Ovary (tissue), 10 donors: ENCODE measurements at regions of chr4 and their contacts with region 1.

Region 1: DNA sequence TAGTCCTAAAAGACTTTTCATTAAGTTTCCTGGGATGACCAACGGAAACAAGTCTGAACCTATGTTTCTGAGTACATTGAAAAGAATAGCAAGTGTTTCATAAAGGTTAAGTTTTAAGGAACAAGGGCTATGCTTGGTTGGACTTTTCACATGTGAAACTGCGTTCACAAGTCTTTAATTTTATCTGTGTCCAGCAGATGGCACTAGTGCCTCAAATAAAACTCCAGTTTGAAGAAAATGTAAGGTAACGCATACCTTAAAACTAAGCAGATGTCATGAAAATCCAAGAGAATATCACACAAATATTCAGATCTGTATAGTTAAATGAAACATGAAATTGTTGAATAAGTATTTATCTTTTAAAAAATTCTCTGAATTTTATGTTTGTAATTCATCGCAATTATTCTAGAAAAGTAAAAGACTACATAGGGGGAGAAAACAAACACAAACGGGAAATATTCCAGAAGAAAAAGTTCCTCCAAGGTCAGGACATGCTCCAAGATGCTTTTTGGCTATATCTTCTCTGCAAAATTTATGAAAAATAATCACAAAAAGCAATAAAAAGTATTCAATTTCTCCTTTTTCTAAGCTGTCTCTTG is 89.6 kb upstream of the MAD2L1 start:
- DNase-seq: peak in 1 of 5 donors; percentile 20
- H3K4me3 ChIP-seq: no peak overlapping the region
- H3K27ac ChIP-seq: no peak overlapping the region
- H3K4me1 ChIP-seq: no peaks in the 10 kb centered on the region
- H3K27me3 ChIP-seq: no peaks in the 10 kb centered on the region
- CTCF ChIP-seq: peak; percentile 51 to 62 (median 57)
- EP300 ChIP-seq: no peak
- POLR2A ChIP-seq: no peak

Region 2: DNA sequence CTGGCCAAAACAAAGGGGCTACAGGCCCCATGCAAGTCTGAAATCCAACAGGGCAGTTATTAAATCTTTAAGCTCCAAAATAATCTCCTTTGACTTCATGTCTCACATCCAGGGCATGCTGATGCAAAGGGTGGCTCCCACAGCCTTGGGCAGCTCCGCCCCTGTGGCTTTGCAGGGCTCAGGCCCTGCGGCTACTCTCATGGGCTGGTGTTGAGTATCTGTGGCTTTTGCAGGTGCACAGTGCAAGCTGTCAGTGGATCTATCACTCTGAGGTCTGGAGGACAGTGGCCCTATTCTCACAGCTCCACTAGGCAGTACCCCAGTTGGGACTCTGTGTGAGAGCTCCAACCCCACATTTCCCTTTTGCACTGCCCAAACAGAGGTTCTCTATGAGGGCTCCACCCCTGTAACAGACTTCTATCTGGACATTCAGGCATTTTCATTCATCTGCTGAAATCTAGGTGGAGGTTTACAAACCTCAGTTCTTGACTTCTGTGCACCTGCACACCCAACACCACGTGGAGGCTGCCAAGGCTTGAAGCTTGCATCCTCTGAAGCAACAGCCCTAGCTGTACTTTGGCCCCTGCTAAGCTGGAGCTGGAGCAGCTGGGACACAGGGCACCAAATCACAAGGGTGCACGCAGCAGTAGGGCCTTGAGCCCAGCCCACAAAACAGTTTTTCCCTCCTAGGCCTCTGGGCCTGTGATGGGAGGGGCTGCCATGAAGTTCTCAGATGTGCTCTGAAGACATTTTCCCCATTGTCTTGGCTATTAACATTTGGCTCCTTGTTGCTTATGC is 372.8 kb before region 1 on chr4:
- intact Hi-C with region 1: no loop called
- DNase-seq: no peak
- H3K4me3 ChIP-seq: no peak overlapping the region
- H3K27ac ChIP-seq: no peak overlapping the region
- H3K4me1 ChIP-seq: no peaks in the 10 kb centered on the region
- H3K27me3 ChIP-seq: no peaks in the 10 kb centered on the region
- CTCF ChIP-seq: no peak
- EP300 ChIP-seq: no peak
- POLR2A ChIP-seq: no peak

Region 3: GRCh38 chr4:120034913-120035312 is 121.3 kb before region 1 on chr4:
- intact Hi-C with region 1: no loop called
- DNase-seq: no peak
- H3K4me3 ChIP-seq: no peak overlapping the region
- H3K27ac ChIP-seq: no peak overlapping the region
- H3K4me1 ChIP-seq: no peaks in the 10 kb centered on the region
- H3K27me3 ChIP-seq: no peaks in the 10 kb centered on the region
- CTCF ChIP-seq: no peak
- EP300 ChIP-seq: no peak
- POLR2A ChIP-seq: no peak

Region 4: GRCh38 chr4:120557372-120557771 is 401.2 kb after region 1 on chr4:
- intact Hi-C with region 1: no loop called
- DNase-seq: no peak
- H3K4me3 ChIP-seq: no peak overlapping the region
- H3K27ac ChIP-seq: no peak overlapping the region
- H3K4me1 ChIP-seq: no peaks in the 10 kb centered on the region
- H3K27me3 ChIP-seq: no peaks in the 10 kb centered on the region
- CTCF ChIP-seq: no peak
- EP300 ChIP-seq: no peak
- POLR2A ChIP-seq: no peak

Region 5: DNA sequence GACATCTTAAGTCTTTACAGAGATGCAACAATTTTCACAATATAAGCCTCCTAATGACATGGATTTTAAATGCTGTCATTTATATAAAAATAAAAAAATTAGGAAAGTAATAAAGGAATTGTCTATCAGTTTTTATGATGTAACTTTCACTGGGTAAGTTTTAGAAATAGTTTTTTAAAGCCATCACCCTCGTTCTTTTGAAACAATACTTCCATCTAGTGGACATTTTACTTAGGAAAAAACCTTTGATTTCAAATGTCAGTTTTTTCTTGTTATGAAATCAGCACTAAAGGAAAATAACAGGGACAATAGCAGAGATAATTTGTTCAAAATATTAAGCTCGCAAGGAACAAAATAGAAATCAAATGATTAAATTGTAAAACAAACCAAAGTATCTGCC is 940.4 kb after region 1 on chr4:
- intact Hi-C with region 1: loop called (anchors 5 to 10 kb)
- DNase-seq: no peak
- H3K4me3 ChIP-seq: no peak overlapping the region
- H3K27ac ChIP-seq: no peak overlapping the region
- H3K4me1 ChIP-seq: no peaks in the 10 kb centered on the region
- H3K27me3 ChIP-seq: no peaks in the 10 kb centered on the region
- CTCF ChIP-seq: peak; percentile 24 to 33 (median 31)
- EP300 ChIP-seq: no peak
- POLR2A ChIP-seq: no peak

Region 6: DNA sequence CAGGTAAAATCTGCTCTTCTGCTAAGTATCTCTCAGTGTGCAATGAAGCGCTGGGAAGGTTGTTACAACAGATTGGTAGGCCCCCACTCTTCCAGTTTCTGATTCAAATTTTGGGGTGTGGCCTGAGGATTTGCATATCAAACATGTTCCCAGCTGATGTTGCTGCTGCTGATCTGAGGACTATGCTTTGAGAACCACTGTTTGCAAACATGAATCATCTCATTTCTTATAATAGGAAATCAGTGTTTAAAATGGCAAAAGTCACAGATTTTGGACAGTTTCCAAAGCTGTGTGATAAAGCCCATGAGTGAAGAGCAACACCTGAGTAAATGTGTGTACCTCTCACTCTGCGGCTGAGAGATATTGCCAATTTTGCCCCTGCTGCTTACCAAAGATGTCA is 952.3 kb after region 1 on chr4:
- intact Hi-C with region 1: loop called in 2 of 4 experiments (anchors 10 kb)
- DNase-seq: no peak
- H3K4me3 ChIP-seq: no peak overlapping the region
- H3K27ac ChIP-seq: no peak overlapping the region
- H3K4me1 ChIP-seq: no peaks in the 10 kb centered on the region
- H3K27me3 ChIP-seq: no peaks in the 10 kb centered on the region
- CTCF ChIP-seq: no peak
- EP300 ChIP-seq: no peak
- POLR2A ChIP-seq: no peak

Region 7: GRCh38 chr4:121252224-121252806 is 1096.1 kb after region 1 on chr4:
- intact Hi-C with region 1: loop called in 1 of 4 experiments (anchors 5 kb)
- DNase-seq: peak; percentile 24 to 64 (median 58)
- H3K4me3 ChIP-seq: no peak overlapping the region
- H3K27ac ChIP-seq: no peak overlapping the region
- H3K4me1 ChIP-seq: no peaks in the 10 kb centered on the region
- H3K27me3 ChIP-seq: no peaks in the 10 kb centered on the region
- CTCF ChIP-seq: peak; percentile 26 to 52 (median 31)
- EP300 ChIP-seq: no peak
- POLR2A ChIP-seq: no peak